ENCODE measurements at regions of chr21 and their contacts with region 1.

Region 1: GRCh38 chr21:39137248-39138178 is 45.7 kb downstream of the PSMG1 start:
- DNase-seq: peak in 6 of 7 donors; percentile 33 to 84 (median 66)
- H3K4me3 ChIP-seq: no peak overlapping the region
- H3K27ac ChIP-seq: peak overlapping the region in 3 of 5 donors; percentile 24 to 77 (median 61)
- H3K4me1 ChIP-seq: peaks cover 0 to 15% of the 10 kb centered on the region in 2 donors
- H3K27me3 ChIP-seq: no peaks in the 10 kb centered on the region
- CTCF ChIP-seq: no peak
- POLR2A ChIP-seq: no peak

Region 2: GRCh38 chr21:38289705-38290485 is 847.6 kb before region 1 on chr21:
- intact Hi-C with region 1: no loop called
- DNase-seq: peak in 6 of 7 donors; percentile 23 to 65 (median 48)
- H3K4me3 ChIP-seq: no peak overlapping the region
- H3K27ac ChIP-seq: no peak overlapping the region
- H3K4me1 ChIP-seq: peaks cover 5 to 16% of the 10 kb centered on the region in 2 donors
- H3K27me3 ChIP-seq: no peaks in the 10 kb centered on the region
- CTCF ChIP-seq: no peak
- POLR2A ChIP-seq: no peak

Region 3: GRCh38 chr21:38505654-38506515 is 631.6 kb before region 1 on chr21:
- intact Hi-C with region 1: loop called in 1 of 2 experiments (anchors 10 kb)
- DNase-seq: peak in 2 of 7 donors; percentile 40 to 62
- H3K4me3 ChIP-seq: no peak overlapping the region
- H3K27ac ChIP-seq: no peak overlapping the region
- H3K4me1 ChIP-seq: peaks cover 0 to 6% of the 10 kb centered on the region in 2 donors
- H3K27me3 ChIP-seq: no peaks in the 10 kb centered on the region
- CTCF ChIP-seq: peak in 5 of 6 experiments; percentile 20 to 55 (median 46)
- POLR2A ChIP-seq: no peak

Region 4: GRCh38 chr21:38733973-38734546 is 403.5 kb before region 1 on chr21:
- intact Hi-C with region 1: loop called in 1 of 2 experiments (anchors 5 kb)
- DNase-seq: peak; percentile 79 to 96 (median 87)
- H3K4me3 ChIP-seq: peak overlapping the region in 1 of 4 donors; percentile 35
- H3K27ac ChIP-seq: peak overlapping the region in 4 of 5 donors; percentile 29 to 86 (median 62)
- H3K4me1 ChIP-seq: peaks cover 0 to 6% of the 10 kb centered on the region in 2 donors
- H3K27me3 ChIP-seq: no peaks in the 10 kb centered on the region
- CTCF ChIP-seq: peak; percentile 85 to 96 (median 94)
- POLR2A ChIP-seq: no peak